Posterior cingulate gyrus (tissue), 11 donors: ENCODE measurements at regions of chr12 and their contacts with region 1.

Region 1: GRCh38 chr12:59595883-59596540 is at the start of gene SLC16A7:
- DNase-seq: peak; percentile 66 to 98 (median 86)

Region 2: GRCh38 chr12:58452546-58452945 is 1143.5 kb before region 1 on chr12:
- intact Hi-C with region 1: no loop called
- DNase-seq: no peak

Region 3: DNA sequence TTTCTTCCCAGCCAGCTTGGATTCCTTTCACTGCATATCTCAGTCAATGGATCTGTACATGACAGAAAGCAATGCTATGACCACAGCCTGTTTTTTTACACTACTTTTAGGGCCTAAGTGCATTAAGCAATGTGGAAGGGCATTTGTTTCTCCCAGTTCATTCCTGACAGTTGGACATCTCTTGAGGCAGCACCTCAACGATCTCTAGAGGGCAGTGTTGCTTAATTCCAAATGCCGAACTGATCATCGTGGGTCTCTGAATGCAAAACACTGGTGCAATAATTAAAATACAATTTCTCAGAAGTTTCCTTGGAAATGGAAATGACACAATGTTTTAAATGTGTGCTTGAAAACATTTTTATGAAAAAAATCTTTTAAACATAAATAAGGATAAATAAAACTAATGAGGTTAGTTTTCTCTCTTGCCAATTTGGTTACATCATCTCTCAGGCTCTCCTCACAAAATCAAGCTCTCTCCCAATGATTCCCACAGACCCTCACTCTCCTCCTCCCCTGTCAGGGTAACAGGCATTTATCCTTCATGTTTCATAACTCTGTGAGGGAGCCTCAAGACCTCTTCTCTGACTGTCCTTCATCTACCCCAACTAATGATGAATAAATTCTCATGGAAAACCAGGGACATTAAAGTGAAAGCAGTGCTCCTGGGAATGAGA is 192.6 kb before region 1 on chr12:
- intact Hi-C with region 1: loop called (anchors 10 kb)
- DNase-seq: peak in 6 of 10 donors; percentile 10 to 85 (median 44)

Region 4: GRCh38 chr12:59484575-59484974 is 111.4 kb before region 1 on chr12:
- intact Hi-C with region 1: no loop called
- DNase-seq: no peak

Region 5: DNA sequence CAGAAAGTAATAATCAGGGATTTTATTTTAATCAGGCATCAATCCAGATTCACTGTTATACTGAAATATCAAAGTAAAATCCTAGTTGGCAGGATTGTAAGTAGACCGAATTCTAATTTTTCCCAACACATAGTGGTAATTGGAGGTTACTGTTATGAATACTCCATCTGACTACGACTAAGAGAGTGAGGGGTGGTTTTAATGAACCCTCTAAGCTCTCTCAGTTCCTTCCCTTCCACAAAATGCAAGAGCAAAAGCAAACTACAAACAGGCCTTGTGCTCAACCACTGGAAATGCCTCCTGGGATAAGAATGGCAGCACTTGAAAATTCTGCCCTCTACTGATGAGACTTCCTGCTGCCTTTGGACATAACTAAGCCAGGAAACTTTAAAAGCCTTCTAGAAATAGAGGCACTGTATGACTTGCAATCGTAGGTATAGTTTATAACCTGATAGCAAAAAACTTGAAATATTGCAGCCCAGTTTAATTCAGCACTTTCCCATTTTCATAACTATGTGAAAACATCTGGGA is 184.7 kb after region 1 on chr12:
- intact Hi-C with region 1: loop called (anchors 5 kb)
- DNase-seq: peak in 2 of 10 donors; percentile 16 to 56